Activated CD8-positive, alpha-beta T cell treated with anti-CD3 and anti-CD28 coated beads, Interleukin-2, amount 10 ng/mL, durations not matched to agents 7 days and 5 days (primary cell): ENCODE measurements at regions of chr1 and their contacts with region 1.

Region 1: GRCh38 chr1:10494754-10495474 is 20.2 kb downstream of the PEX14 start:
- DNase-seq: peak; percentile 89
- ATAC-seq: peak; percentile 82
- H3K4me3 Mint-ChIP-seq: peak overlapping the region; percentile 73
- H3K27ac Mint-ChIP-seq: peak overlapping the region; percentile 88
- H3K4me1 Mint-ChIP-seq: peaks cover 55% of the 10 kb centered on the region
- H3K27me3 Mint-ChIP-seq: no peaks in the 10 kb centered on the region

Region 2: DNA sequence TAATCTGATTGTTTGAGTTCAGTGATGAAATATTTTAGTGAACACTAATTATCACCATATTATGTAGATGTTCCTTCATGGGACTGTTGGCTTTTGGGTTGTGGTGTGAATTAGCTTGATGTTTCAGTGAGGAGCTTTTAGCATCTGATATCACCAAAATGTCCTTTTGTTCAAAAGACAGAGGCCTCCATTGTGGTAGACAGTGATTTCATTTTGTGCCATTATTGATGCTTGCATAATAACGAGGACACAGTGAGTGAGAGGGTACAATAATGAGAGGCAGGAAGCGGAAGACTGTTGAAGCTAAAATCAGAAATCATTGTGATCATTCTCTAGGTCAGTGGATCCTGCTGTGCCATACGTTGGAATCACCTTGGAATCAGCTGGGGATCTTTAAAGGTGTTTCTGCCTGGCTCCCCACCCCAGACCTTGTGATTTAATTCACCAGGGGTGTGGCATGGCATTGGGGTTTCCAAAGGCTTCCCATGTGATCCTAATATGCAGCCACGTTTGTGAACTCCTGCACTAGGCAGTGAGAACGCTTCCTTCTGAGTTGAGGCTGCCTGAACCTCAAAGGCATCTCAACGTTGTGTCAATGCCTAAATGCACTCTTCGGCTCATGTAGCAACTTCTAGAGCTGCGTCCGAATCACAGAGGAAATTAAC is 366.7 kb before region 1 on chr1:
- CTCF ChIA-PET with region 1: no interaction called
- POLR2A ChIA-PET with region 1: no interaction called
- DNase-seq: no peak
- ATAC-seq: no peak
- H3K4me3 Mint-ChIP-seq: no peak overlapping the region
- H3K27ac Mint-ChIP-seq: no peak overlapping the region
- H3K4me1 Mint-ChIP-seq: no peaks in the 10 kb centered on the region
- H3K27me3 Mint-ChIP-seq: no peaks in the 10 kb centered on the region

Region 3: DNA sequence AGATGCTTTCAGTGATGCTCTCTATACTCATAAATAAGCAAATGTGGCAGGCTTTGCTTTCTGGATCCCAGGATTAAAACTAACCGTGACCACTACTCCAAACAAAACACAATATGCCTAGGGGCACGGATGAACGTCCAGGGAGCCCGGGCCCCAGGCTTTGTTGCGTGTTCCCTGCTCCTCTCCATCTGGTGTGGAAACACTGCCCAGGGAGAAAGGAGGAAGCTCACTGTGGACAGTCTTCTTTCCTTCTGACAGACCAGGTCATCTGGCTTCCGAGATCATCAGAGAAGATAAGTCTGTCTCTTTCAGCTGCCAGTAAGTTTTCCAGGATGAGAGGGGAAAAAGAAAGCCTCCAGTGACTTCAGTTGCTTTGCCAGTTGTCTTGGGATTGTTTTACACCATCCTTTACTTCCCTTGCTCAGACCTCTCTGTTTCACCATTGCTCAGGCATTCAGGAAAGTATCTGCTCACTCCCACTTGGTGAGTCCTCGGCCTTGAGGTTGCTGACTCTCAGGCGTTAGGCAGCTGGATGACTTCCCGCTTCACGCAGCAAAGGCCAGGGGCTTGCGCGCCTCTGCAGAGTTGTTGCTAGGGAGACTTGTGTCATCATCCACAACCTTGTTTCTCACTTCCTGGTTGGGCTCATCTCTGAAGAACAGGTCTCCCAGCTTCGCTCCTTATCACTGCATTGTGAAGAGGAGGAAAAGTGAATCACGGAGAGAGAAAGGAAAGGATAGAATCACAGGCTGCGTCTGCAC is 116.7 kb before region 1 on chr1:
- CTCF ChIA-PET with region 1: interaction called, 17 read pairs
- POLR2A ChIA-PET with region 1: no interaction called
- DNase-seq: no peak
- ATAC-seq: no peak
- H3K4me3 Mint-ChIP-seq: no peak overlapping the region
- H3K27ac Mint-ChIP-seq: no peak overlapping the region
- H3K4me1 Mint-ChIP-seq: no peaks in the 10 kb centered on the region
- H3K27me3 Mint-ChIP-seq: no peaks in the 10 kb centered on the region

Region 4: GRCh38 chr1:10438677-10439163 is 56.2 kb before region 1 on chr1:
- CTCF ChIA-PET with region 1: interaction called, 50 read pairs
- POLR2A ChIA-PET with region 1: interaction called, 3 read pairs
- DNase-seq: no peak
- ATAC-seq: no peak
- H3K4me3 Mint-ChIP-seq: no peak overlapping the region
- H3K27ac Mint-ChIP-seq: no peak overlapping the region
- H3K4me1 Mint-ChIP-seq: peaks cover 2% of the 10 kb centered on the region
- H3K27me3 Mint-ChIP-seq: no peaks in the 10 kb centered on the region

Region 5: DNA sequence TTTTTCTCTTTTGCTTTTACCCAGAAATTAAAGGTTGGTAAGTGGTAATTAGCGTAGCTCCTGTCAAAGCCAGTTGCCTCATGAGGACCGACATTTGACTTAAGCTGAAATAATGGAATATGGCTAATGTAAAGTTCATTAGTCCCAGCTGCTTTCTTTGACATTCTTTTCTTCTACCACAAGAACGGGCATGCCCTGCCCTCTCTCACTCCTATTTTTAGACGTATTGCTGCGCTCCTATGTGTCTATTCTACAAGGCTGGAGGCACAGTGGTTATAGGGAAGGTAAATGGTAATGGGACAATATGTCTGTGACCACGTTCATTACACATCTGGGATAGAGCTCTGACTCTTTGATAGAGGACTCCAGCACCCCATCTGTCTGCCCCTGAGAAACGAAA is 38.3 kb before region 1 on chr1:
- CTCF ChIA-PET with region 1: interaction called, 11 read pairs
- POLR2A ChIA-PET with region 1: no interaction called
- DNase-seq: no peak
- ATAC-seq: no peak
- H3K4me3 Mint-ChIP-seq: no peak overlapping the region
- H3K27ac Mint-ChIP-seq: no peak overlapping the region
- H3K4me1 Mint-ChIP-seq: peaks cover 12% of the 10 kb centered on the region
- H3K27me3 Mint-ChIP-seq: no peaks in the 10 kb centered on the region

Region 6: DNA sequence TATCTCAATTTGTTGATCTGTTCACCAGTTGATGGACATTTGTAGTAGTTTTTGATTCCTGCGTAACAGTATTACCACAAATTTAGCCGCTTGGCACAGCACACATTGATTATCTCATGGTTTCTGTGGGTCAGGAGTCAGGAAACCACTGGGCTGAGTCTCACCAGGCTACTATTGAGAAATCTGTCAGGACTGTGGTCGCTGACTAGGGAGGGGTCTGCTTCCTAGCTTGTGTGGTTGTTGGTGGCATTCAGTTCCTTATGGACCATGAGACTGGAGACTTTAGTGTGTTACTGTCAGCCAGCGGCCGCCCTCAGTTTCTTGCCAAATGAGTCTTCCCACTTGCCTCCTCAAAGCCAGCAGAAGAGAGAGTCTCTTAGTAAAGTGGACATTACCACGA is 10.4 kb before region 1 on chr1:
- CTCF ChIA-PET with region 1: interaction called, 37 read pairs
- POLR2A ChIA-PET with region 1: no interaction called
- DNase-seq: no peak
- ATAC-seq: no peak
- H3K4me3 Mint-ChIP-seq: no peak overlapping the region
- H3K27ac Mint-ChIP-seq: no peak overlapping the region
- H3K4me1 Mint-ChIP-seq: peaks cover 6% of the 10 kb centered on the region
- H3K27me3 Mint-ChIP-seq: no peaks in the 10 kb centered on the region

Region 7: GRCh38 chr1:10522322-10522860 is 27.5 kb after region 1 on chr1:
- CTCF ChIA-PET with region 1: interaction called, 12 read pairs
- POLR2A ChIA-PET with region 1: no interaction called
- DNase-seq: no peak
- ATAC-seq: no peak
- H3K4me3 Mint-ChIP-seq: no peak overlapping the region
- H3K27ac Mint-ChIP-seq: no peak overlapping the region
- H3K4me1 Mint-ChIP-seq: peaks cover 36% of the 10 kb centered on the region
- H3K27me3 Mint-ChIP-seq: no peaks in the 10 kb centered on the region